ENCODE measurements at regions of chr6 and their contacts with region 1.

Region 1: GRCh38 chr6:21935561-21936028 is 342.0 kb downstream of the SOX4 start:
- DNase-seq: peak; percentile 52
- H3K4me3 ChIP-seq: no peak overlapping the region
- H3K27ac ChIP-seq: no peak overlapping the region
- H3K4me1 ChIP-seq: no peaks in the 10 kb centered on the region
- H3K27me3 ChIP-seq: no peaks in the 10 kb centered on the region
- CTCF ChIP-seq: peak; percentile 64

Region 2: DNA sequence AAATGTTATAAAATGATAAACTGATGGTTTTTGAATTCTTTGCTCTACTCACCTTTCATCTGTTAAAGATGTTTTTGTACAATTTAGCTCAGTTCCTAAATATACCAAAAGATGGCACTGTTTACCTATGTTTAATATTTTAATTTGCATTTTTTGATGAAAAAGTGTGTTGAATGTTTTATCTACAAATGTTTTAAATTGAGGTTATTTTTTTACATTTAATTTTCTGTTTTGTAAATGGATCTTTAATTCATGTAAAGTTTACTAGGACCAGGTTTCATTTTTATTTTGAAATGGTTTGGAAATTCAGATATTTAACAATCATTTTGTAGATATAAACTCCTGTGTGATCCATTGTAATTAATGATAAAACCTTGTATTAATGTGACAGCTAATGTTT is 1371.3 kb before region 1 on chr6:
- intact Hi-C with region 1: loop called (anchors 10 kb)
- DNase-seq: no peak
- H3K4me3 ChIP-seq: no peak overlapping the region
- H3K27ac ChIP-seq: no peak overlapping the region
- H3K4me1 ChIP-seq: no peaks in the 10 kb centered on the region
- H3K27me3 ChIP-seq: no peaks in the 10 kb centered on the region
- CTCF ChIP-seq: peak; percentile 60

Region 3: DNA sequence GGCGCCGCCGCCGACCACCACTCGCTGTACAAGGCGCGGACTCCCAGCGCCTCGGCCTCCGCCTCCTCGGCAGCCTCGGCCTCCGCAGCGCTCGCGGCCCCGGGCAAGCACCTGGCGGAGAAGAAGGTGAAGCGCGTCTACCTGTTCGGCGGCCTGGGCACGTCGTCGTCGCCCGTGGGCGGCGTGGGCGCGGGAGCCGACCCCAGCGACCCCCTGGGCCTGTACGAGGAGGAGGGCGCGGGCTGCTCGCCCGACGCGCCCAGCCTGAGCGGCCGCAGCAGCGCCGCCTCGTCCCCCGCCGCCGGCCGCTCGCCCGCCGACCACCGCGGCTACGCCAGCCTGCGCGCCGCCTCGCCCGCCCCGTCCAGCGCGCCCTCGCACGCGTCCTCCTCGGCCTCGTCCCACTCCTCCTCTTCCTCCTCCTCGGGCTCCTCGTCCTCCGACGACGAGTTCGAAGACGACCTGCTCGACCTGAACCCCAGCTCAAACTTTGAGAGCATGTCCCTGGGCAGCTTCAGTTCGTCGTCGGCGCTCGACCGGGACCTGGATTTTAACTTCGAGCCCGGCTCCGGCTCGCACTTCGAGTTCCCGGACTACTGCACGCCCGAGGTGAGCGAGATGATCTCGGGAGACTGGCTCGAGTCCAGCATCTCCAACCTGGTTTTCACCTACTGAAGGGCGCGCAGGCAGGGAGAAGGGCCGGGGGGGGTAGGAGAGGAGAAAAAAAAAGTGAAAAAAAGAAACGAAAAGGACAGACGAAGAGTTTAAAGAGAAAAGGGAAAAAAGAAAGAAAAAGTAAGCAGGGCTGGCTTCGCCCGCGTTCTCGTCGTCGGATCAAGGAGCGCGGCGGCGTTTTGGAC is 340.1 kb before region 1 on chr6:
- intact Hi-C with region 1: loop called (anchors 2 kb)
- DNase-seq: peak; percentile 53
- H3K4me3 ChIP-seq: peak overlapping the region; percentile 75
- H3K27ac ChIP-seq: peak overlapping the region; percentile 94
- H3K4me1 ChIP-seq: no peaks in the 10 kb centered on the region
- H3K27me3 ChIP-seq: no peaks in the 10 kb centered on the region
- CTCF ChIP-seq: no peak